Activated T-helper 2 cell treated with anti-CD3 and anti-CD28 coated beads, Interferon-gamma antibody, Interleukin-2, Interleukin-4, amounts not matched to agents 10 μg/mL and 5 μg/mL and 100 μg/mL, durations not matched to agents 14 hours and 24 hours and 36 hours (primary cell): ENCODE measurements at regions of chr16 and their contacts with region 1.

Region 1: GRCh38 chr16:66899945-66900710 is 18.6 kb downstream of the CDH16 start:
- DNase-seq: no peak
- H3K4me3 Mint-ChIP-seq: no peak overlapping the region
- H3K27ac Mint-ChIP-seq: no peak overlapping the region
- H3K4me1 Mint-ChIP-seq: peaks cover 3% of the 10 kb centered on the region
- H3K27me3 Mint-ChIP-seq: no peaks in the 10 kb centered on the region

Region 2: GRCh38 chr16:66961065-66961744 is 61.1 kb after region 1 on chr16 and contains the start of gene CES3:
- intact Hi-C with region 1: loop called (anchors 10 kb)
- DNase-seq: peak; percentile 66
- H3K4me3 Mint-ChIP-seq: peak within 1 kb of the TSS; percentile 82
- H3K27ac Mint-ChIP-seq: peak within 1 kb of the TSS; percentile 81
- H3K4me1 Mint-ChIP-seq: peaks cover 21% of the 10 kb centered on the region
- H3K27me3 Mint-ChIP-seq: no peaks in the 10 kb centered on the region
- total RNA-seq, gene CES3: 9.4 and 10.6 TPM in 2 replicates